Caco-2 (cell line): ENCODE measurements at regions of chr6 and their contacts with region 1.

Region 1: GRCh38 chr6:117482240-117483003 is at the start of gene DCBLD1:
- DNase-seq: peak; percentile 85 to 89
- H3K4me3 ChIP-seq: peak within 1 kb of the TSS; percentile 91
- H3K4me3 Mint-ChIP-seq: peak within 1 kb of the TSS; percentile 80
- H3K27ac Mint-ChIP-seq: peak within 1 kb of the TSS; percentile 93
- H3K4me1 ChIP-seq: peaks cover 13% of the 10 kb centered on the region
- H3K4me1 Mint-ChIP-seq: peaks cover 22% of the 10 kb centered on the region
- H3K27me3 ChIP-seq: no peaks in the 10 kb centered on the region
- H3K27me3 Mint-ChIP-seq: no peaks in the 10 kb centered on the region
- CTCF ChIP-seq: no peak
- total RNA-seq, gene DCBLD1: 69.3 and 73.4 TPM in 2 replicates

Region 2: GRCh38 chr6:117494283-117494682 is 11.9 kb after region 1 on chr6:
- CTCF ChIA-PET with region 1: no interaction called
- POLR2A ChIA-PET with region 1: interaction called, 4 read pairs
- intact Hi-C with region 1: loop called (anchors 1 kb)
- DNase-seq: no peak
- H3K4me3 ChIP-seq: no peak overlapping the region
- H3K4me3 Mint-ChIP-seq: no peak overlapping the region
- H3K27ac Mint-ChIP-seq: no peak overlapping the region
- H3K4me1 ChIP-seq: peaks cover 27% of the 10 kb centered on the region
- H3K4me1 Mint-ChIP-seq: peaks cover 28% of the 10 kb centered on the region
- H3K27me3 ChIP-seq: no peaks in the 10 kb centered on the region
- H3K27me3 Mint-ChIP-seq: no peaks in the 10 kb centered on the region
- CTCF ChIP-seq: no peak

Region 3: DNA sequence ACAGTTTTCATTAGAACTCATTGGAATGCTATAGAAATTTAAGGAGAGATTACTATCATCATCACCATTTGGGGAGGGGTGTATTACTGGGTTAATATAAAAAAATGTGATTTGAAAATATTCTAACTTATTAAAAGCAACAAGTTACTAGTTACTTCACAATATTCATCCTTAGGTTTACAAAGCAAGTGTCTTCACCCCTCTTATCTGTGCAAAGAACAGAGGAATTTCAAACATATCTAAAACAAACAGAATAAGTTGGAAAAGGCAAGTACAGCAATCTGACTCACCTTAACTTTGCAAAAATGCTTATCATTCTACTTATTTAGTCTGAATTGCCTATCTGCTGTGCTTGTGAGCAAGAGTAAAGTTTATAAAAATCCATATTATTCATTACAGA is 32.9 kb after region 1 on chr6:
- CTCF ChIA-PET with region 1: no interaction called
- POLR2A ChIA-PET with region 1: no interaction called
- intact Hi-C with region 1: loop called (anchors 1 kb)
- DNase-seq: peak in 1 of 2 experiments; percentile 42
- H3K4me3 ChIP-seq: no peak overlapping the region
- H3K4me3 Mint-ChIP-seq: peak overlapping the region; percentile 5
- H3K27ac Mint-ChIP-seq: peak overlapping the region; percentile 94
- H3K4me1 ChIP-seq: peaks cover 88% of the 10 kb centered on the region
- H3K4me1 Mint-ChIP-seq: peaks cover 60% of the 10 kb centered on the region
- H3K27me3 ChIP-seq: no peaks in the 10 kb centered on the region
- H3K27me3 Mint-ChIP-seq: no peaks in the 10 kb centered on the region
- CTCF ChIP-seq: no peak

Region 4: GRCh38 chr6:117548797-117549301 is 66.4 kb after region 1 on chr6:
- CTCF ChIA-PET with region 1: interaction called, 10 read pairs
- POLR2A ChIA-PET with region 1: interaction called, 3 read pairs
- intact Hi-C with region 1: no loop called
- DNase-seq: no peak
- H3K4me3 ChIP-seq: no peak overlapping the region
- H3K4me3 Mint-ChIP-seq: no peak overlapping the region
- H3K27ac Mint-ChIP-seq: peak overlapping the region; percentile 40
- H3K4me1 ChIP-seq: peaks cover 61% of the 10 kb centered on the region
- H3K4me1 Mint-ChIP-seq: peaks cover 34% of the 10 kb centered on the region
- H3K27me3 ChIP-seq: no peaks in the 10 kb centered on the region
- H3K27me3 Mint-ChIP-seq: no peaks in the 10 kb centered on the region
- CTCF ChIP-seq: no peak

Region 5: DNA sequence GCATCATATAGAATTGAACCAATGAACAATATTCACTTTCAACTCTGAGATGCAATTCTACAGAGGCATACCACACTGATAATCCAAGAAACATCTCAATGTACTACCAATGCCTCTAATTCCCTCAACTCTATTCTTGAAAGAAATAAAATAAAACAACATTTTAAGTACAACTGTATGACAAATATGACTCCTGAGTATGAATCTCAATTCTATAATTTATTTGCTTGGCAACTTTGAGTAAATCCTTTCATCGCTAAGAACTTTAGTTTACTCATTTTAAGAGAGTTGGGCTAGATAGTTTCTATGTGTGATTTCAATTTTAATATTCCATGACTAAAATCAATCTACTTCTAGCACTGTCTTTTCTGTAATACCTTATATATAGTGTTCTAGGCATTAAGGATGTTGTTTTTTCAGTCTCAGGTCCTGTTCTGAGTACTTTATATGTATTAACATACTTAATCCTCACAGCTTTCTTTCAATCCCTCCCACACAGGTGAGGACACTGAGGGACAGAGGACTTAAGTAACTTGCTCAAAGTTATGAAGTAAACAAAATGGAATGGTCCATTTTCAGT is 86.5 kb after region 1 on chr6:
- CTCF ChIA-PET with region 1: interaction called, 12 read pairs
- POLR2A ChIA-PET with region 1: no interaction called
- intact Hi-C with region 1: no loop called
- DNase-seq: no peak
- H3K4me3 ChIP-seq: no peak overlapping the region
- H3K4me3 Mint-ChIP-seq: no peak overlapping the region
- H3K27ac Mint-ChIP-seq: no peak overlapping the region
- H3K4me1 ChIP-seq: no peaks in the 10 kb centered on the region
- H3K4me1 Mint-ChIP-seq: no peaks in the 10 kb centered on the region
- H3K27me3 ChIP-seq: no peaks in the 10 kb centered on the region
- H3K27me3 Mint-ChIP-seq: no peaks in the 10 kb centered on the region
- CTCF ChIP-seq: no peak